Testis (tissue), 5 donors: ENCODE measurements at regions of chr1 and their contacts with region 1.

Region 1: DNA sequence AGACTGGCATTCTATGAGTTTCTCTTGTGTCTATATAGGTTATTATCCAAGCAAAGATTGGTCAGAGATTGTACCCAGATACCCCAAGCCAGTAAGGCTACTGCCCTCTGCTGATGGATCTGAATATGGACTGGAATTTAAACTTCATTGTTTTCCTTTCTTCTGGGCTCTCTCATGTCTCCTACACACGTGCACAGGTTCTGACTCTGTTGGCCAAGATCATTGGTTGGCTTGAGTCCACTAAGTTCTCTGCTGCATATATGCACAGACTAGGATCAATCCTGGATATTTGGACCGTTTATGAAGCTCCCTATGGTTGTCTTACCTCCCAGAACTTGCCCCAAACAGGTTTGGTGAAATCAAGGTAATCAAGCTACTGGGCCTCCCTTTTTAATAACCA is 69.7 kb downstream of the CC2D1B start:
- DNase-seq: no peak
- H3K4me3 ChIP-seq: no peak overlapping the region
- H3K27ac ChIP-seq: no peak overlapping the region
- H3K4me1 ChIP-seq: no peaks in the 10 kb centered on the region
- H3K27me3 ChIP-seq: no peaks in the 10 kb centered on the region
- CTCF ChIP-seq: peak; percentile 32 to 62 (median 56)
- POLR2A ChIP-seq: no peak

Region 2: DNA sequence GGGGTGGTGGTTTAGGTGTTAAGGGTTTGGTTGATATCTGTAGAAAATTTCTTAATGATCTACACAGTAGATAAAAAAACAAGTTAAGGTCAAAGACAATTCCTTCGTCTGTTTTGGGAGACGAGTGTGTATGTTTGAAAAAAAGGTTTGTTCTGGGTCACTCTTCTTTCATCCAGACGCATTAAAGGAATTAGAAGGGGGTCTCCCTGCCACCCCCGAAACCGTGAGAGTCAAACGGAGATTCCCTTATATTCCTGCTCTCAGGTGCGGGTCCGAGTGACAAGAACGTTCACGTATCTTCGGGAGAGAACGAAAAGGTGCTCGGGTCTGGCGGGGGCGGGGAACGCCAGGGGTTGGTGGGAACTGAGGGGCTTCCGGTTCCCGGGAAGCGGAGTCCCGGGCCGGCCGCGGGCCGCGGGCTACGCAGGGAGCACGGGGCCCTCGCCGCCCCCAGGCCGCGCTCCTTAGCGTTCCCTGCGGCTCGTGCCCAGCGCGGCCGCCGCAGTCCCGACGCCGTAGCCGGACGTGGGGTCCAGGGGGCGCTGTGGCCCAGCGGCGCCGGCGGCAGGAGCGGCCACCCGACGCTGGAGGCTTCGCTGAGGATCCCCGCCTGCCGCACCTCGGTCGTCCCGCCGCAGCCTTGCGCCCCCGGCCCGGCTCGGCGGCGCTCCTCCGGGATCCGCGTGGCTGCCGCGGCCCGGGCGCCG is 154.7 kb before region 1 on chr1 and contains the start of gene ZFYVE9:
- intact Hi-C with region 1: loop called (anchors 10 kb)
- DNase-seq: peak; percentile 73
- H3K4me3 ChIP-seq: peak within 1 kb of the TSS; percentile 88 to 94
- H3K27ac ChIP-seq: peak within 1 kb of the TSS; percentile 95 to 98
- H3K4me1 ChIP-seq: peaks cover 6% of the 10 kb centered on the region
- H3K27me3 ChIP-seq: no peaks in the 10 kb centered on the region
- CTCF ChIP-seq: peak; percentile 57 to 87 (median 80)
- POLR2A ChIP-seq: no peak
- total RNA-seq, gene ZFYVE9: 32.5 to 51.3 TPM